ENCODE measurements at regions of chr5 and their contacts with region 1.

Region 1: DNA sequence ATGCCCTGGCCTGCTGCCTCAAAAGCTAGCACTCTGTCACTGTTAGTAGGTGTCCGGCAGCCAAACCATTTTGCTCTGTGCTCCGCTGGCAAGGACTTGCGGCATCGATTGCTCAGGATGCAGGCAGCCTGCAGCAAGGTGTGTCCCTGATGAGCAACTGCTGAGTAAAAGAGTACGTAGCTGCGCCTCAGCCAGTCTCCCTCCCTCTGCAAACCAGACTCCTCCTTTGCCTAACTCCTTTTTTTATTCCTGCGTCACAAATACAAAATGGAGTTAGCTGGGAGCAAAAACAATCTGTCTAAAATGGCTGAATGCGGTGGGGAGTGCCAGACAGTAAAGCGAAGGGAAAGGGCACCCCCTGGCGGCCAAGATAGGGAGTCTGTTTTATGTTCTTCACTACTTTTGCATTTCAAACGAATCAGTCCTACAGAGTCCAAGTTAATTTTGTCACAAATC is 61.1 kb downstream of the DIAPH1 start:
- DNase-seq: peak; percentile 98
- H3K4me3 ChIP-seq: peak overlapping the region; percentile 24 to 42 (median 40)
- H3K27ac ChIP-seq: peak overlapping the region; percentile 84 to 88 (median 86)
- H3K4me1 ChIP-seq: peaks cover 34 to 44% (median 39%) of the 10 kb centered on the region in 4 donors
- H3K27me3 ChIP-seq: no peaks in the 10 kb centered on the region
- CTCF ChIP-seq: peak; percentile 86 to 91 (median 87)
- EP300 ChIP-seq: peak; percentile 7
- POLR2A ChIP-seq: no peak

Region 2: GRCh38 chr5:141320225-141321169 is 237.2 kb before region 1 on chr5 and contains the start of gene TAF7:
- intact Hi-C with region 1: loop called (anchors 5 kb)
- DNase-seq: peak; percentile 95
- H3K4me3 ChIP-seq: peak within 1 kb of the TSS; percentile 58 to 74 (median 70)
- H3K27ac ChIP-seq: peak within 1 kb of the TSS; percentile 90 to 92 (median 92)
- H3K4me1 ChIP-seq: peaks cover 4 to 11% (median 7%) of the 10 kb centered on the region in 4 donors
- H3K27me3 ChIP-seq: no peaks in the 10 kb centered on the region
- CTCF ChIP-seq: peak; percentile 64 to 80 (median 70)
- EP300 ChIP-seq: no peak
- POLR2A ChIP-seq: peak; percentile 90
- total RNA-seq, gene TAF7: 44.0 to 65.9 (median 59.1) TPM

Region 3: DNA sequence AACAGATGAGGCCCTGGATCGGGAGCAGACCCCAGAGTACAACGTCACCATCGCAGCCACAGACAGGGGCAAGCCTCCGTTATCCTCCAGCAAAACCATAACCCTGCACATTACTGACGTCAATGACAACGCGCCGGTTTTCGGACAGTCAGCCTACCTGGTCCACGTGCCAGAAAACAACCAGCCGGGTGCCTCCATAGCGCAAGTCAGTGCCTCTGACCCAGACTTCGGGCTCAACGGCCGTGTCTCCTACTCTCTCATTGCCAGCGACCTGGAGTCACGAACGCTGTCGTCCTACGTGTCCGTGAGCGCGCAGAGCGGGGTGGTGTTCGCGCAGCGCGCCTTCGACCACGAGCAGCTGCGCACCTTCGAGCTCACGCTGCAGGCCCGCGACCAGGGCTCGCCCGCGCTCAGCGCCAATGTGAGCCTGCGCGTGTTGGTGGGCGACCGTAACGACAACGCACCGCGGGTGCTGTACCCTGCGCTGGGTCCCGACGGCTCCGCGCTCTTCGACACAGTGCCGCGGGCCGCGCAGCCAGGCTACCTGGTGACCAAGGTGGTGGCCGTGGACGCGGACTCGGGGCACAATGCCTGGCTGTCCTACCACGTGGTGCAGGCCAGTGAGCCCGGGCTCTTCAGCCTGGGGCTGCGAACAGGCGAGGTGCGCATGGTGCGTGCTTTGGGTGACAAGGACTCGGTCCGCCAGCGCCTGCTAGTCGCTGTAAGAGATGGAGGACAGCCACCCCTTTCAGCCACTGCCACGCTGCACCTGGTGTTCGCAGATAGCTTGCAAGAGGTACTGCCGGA is 138.4 kb before region 1 on chr5:
- intact Hi-C with region 1: loop called (anchors 5 kb)
- DNase-seq: peak; percentile 62
- H3K4me3 ChIP-seq: peak overlapping the region in 1 of 4 donors; percentile 7
- H3K27ac ChIP-seq: no peak overlapping the region
- H3K4me1 ChIP-seq: peaks cover 0 to 17% (median 6%) of the 10 kb centered on the region in 4 donors
- H3K27me3 ChIP-seq: no peaks in the 10 kb centered on the region
- CTCF ChIP-seq: no peak
- EP300 ChIP-seq: no peak
- POLR2A ChIP-seq: no peak

Region 4: GRCh38 chr5:141475625-141476131 is 82.0 kb before region 1 on chr5 and contains the start of gene PCDHGC3:
- intact Hi-C with region 1: loop called (anchors 5 kb)
- DNase-seq: peak; percentile 97
- H3K4me3 ChIP-seq: peak within 1 kb of the TSS; percentile 64 to 75 (median 68)
- H3K27ac ChIP-seq: peak within 1 kb of the TSS; percentile 84 to 93 (median 89)
- H3K4me1 ChIP-seq: peaks cover 39 to 49% (median 48%) of the 10 kb centered on the region in 4 donors
- H3K27me3 ChIP-seq: no peaks in the 10 kb centered on the region
- CTCF ChIP-seq: peak; percentile 40 to 64 (median 58)
- EP300 ChIP-seq: no peak
- POLR2A ChIP-seq: no peak
- total RNA-seq, gene PCDHGC3: 56.5 to 81.1 (median 65.5) TPM

Region 5: GRCh38 chr5:141524604-141525597 is 32.8 kb before region 1 on chr5:
- intact Hi-C with region 1: loop called (anchors 2 kb)
- DNase-seq: peak; percentile 97
- H3K4me3 ChIP-seq: no peak overlapping the region
- H3K27ac ChIP-seq: peak overlapping the region; percentile 73 to 83 (median 82)
- H3K4me1 ChIP-seq: peaks cover 71 to 87% (median 78%) of the 10 kb centered on the region in 4 donors
- H3K27me3 ChIP-seq: no peaks in the 10 kb centered on the region
- CTCF ChIP-seq: peak; percentile 99 to 100 (median 99)
- EP300 ChIP-seq: no peak
- POLR2A ChIP-seq: no peak